ENCODE measurements at regions of chr11 and their contacts with region 1.

Region 1: GRCh38 chr11:16335236-16335962 is 20.9 kb downstream of the SOX6 start:
- DNase-seq: peak in 1 of 2 experiments; percentile 62
- H3K4me3 ChIP-seq: no peak overlapping the region
- H3K4me3 Mint-ChIP-seq: peak overlapping the region; percentile 12
- H3K27ac Mint-ChIP-seq: peak overlapping the region; percentile 85
- H3K4me1 ChIP-seq: peaks cover 46% of the 10 kb centered on the region
- H3K4me1 Mint-ChIP-seq: peaks cover 21% of the 10 kb centered on the region
- H3K27me3 ChIP-seq: no peaks in the 10 kb centered on the region
- H3K27me3 Mint-ChIP-seq: no peaks in the 10 kb centered on the region
- CTCF ChIP-seq: no peak

Region 2: GRCh38 chr11:16356057-16356760 is 20.8 kb after region 1 on chr11 and contains the start of gene SOX6:
- CTCF ChIA-PET with region 1: no interaction called
- POLR2A ChIA-PET with region 1: no interaction called
- intact Hi-C with region 1: loop called (anchors 1 kb)
- DNase-seq: peak; percentile 47 to 56
- H3K4me3 ChIP-seq: no peak within 1 kb of the TSS
- H3K4me3 Mint-ChIP-seq: peak within 1 kb of the TSS; percentile 20
- H3K27ac Mint-ChIP-seq: peak within 1 kb of the TSS; percentile 48
- H3K4me1 ChIP-seq: peaks cover 29% of the 10 kb centered on the region
- H3K4me1 Mint-ChIP-seq: peaks cover 37% of the 10 kb centered on the region
- H3K27me3 ChIP-seq: no peaks in the 10 kb centered on the region
- H3K27me3 Mint-ChIP-seq: no peaks in the 10 kb centered on the region
- CTCF ChIP-seq: peak in 1 of 2 experiments; percentile 13
- total RNA-seq, gene SOX6: 10.8 and 24.0 TPM in 2 replicates

Region 3: DNA sequence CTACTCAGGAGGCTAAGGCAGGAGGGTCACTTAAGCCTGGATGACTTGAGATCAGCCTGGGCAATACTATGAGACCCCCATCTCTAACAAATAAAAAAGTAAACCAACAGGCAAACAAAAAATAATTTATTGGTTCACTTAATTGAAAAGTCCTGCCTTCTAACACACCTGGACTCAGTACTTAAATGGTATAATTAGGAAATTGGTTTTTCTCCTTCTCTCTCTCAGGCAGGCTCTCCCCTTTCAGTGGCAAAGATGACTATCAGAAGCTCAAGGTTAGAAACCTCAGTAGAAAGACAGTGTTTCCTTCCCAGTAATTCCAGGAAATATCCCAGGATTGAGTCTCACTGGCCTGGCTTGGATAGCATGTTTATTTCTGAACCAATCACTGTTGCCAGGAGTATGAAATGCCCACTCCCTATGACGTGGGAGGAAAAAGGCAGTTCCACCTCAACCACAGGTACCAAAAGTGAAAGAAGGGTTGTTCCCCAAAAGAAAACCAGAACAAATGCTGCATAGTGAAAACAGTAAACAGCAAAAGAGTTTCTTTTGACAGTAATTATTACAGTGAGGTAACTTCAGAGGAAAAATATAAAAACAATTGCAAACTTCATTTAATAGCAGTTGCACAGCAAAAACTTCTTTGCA is 77.2 kb after region 1 on chr11:
- CTCF ChIA-PET with region 1: no interaction called
- POLR2A ChIA-PET with region 1: no interaction called
- intact Hi-C with region 1: no loop called
- DNase-seq: no peak
- H3K4me3 ChIP-seq: no peak overlapping the region
- H3K4me3 Mint-ChIP-seq: no peak overlapping the region
- H3K27ac Mint-ChIP-seq: no peak overlapping the region
- H3K4me1 ChIP-seq: no peaks in the 10 kb centered on the region
- H3K4me1 Mint-ChIP-seq: no peaks in the 10 kb centered on the region
- H3K27me3 ChIP-seq: no peaks in the 10 kb centered on the region
- H3K27me3 Mint-ChIP-seq: no peaks in the 10 kb centered on the region
- CTCF ChIP-seq: no peak

Measured in Caco-2 (cell line).